Activated CD4-positive, alpha-beta T cell treated with anti-CD3 and anti-CD28 coated beads, Interleukin-2, amount 10 ng/mL, durations not matched to agents 24 days and 14 days (primary cell): ENCODE measurements at regions of chr1 and their contacts with region 1.

Region 1: DNA sequence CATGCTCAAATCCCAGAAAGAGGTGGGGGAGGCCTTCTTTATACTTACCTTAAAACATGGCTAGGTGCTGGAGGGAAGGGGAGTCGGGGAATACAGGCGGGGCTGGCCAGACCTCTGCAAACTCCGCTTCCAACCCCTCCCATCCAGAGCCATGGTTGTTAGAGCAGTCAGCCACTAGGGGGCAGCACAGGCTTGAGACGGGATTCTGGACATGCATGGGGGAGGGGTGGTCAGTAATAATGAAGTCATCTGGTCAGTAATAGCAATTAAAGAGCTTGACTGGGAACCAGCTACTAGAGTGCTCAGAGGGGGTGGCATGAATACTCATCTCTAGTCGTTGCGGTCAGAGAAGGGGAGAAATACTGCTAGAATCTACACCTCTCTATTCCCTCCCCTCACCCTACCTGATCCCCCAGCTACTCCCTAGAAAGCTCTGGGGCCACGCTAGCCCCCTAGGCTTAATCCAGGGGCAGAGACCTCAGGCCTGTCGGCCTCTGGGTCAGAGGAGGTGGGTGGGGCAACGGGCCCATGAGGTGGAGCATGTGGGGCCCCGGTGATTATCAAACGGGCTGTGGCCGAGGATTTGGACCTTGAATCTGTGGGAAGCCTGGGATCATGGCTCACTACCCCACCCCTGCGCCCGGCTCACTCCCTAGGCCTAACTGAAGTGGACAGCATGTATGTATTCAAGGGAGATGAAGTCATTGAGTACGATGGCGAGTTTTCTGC is 2.9 kb downstream of the CASQ1 start:
- DNase-seq: peak; percentile 94
- H3K4me3 Mint-ChIP-seq: no peak overlapping the region
- H3K27ac Mint-ChIP-seq: no peak overlapping the region
- H3K4me1 Mint-ChIP-seq: no peaks in the 10 kb centered on the region
- H3K27me3 Mint-ChIP-seq: no peaks in the 10 kb centered on the region

Region 2: DNA sequence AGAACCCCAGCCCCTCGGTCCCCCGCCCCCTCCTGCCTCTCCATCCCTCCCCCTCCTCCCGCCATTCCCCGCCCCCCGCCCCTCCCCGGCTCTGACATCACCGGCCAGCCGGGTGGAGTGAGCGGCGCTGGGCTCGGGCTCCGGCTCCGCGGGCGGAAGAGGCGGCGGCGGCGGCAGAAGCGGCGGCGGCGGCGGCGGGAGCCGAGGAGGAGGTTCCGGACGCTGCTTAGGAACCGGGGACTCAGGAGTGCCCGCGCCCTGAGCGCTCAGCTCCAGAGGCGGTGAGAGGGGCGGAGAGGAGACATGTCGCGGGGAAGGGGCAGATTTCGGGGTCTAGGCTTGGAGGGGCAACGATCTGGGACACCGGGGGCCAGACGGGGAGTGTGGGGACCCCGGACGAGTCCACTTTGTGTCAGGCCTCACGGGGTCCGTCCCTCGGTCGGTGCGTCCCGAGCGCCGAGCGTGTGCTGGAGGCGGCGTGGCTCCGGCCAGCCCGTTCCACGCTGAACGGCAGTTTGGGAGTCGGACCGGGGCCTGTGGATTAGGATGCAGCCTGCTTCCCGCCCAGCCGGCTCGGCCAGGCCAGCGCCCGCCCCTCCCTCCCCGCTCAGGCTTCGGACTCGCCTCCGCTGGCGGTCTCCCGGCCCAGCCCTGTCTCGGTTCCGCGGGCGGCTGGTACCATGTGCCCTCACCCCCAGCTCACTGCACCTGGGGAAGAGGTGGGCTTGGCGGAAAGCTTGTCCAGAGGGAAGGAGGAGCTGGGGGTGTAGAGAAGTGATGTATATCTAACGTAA is 12.2 kb after region 1 on chr1 and contains the start of gene PEA15:
- intact Hi-C with region 1: loop called (anchors 1 kb)
- DNase-seq: peak; percentile 92
- H3K4me3 Mint-ChIP-seq: peak within 1 kb of the TSS; percentile 91
- H3K27ac Mint-ChIP-seq: peak within 1 kb of the TSS; percentile 91
- H3K4me1 Mint-ChIP-seq: peaks cover 40% of the 10 kb centered on the region
- H3K27me3 Mint-ChIP-seq: no peaks in the 10 kb centered on the region
- total RNA-seq, gene PEA15: 70.2 and 70.9 TPM in 2 replicates

Region 3: GRCh38 chr1:160226623-160227022 is 33.4 kb after region 1 on chr1:
- intact Hi-C with region 1: loop called (anchors 5 kb)
- DNase-seq: no peak
- H3K4me3 Mint-ChIP-seq: no peak overlapping the region
- H3K27ac Mint-ChIP-seq: no peak overlapping the region
- H3K4me1 Mint-ChIP-seq: no peaks in the 10 kb centered on the region
- H3K27me3 Mint-ChIP-seq: no peaks in the 10 kb centered on the region

Region 4: DNA sequence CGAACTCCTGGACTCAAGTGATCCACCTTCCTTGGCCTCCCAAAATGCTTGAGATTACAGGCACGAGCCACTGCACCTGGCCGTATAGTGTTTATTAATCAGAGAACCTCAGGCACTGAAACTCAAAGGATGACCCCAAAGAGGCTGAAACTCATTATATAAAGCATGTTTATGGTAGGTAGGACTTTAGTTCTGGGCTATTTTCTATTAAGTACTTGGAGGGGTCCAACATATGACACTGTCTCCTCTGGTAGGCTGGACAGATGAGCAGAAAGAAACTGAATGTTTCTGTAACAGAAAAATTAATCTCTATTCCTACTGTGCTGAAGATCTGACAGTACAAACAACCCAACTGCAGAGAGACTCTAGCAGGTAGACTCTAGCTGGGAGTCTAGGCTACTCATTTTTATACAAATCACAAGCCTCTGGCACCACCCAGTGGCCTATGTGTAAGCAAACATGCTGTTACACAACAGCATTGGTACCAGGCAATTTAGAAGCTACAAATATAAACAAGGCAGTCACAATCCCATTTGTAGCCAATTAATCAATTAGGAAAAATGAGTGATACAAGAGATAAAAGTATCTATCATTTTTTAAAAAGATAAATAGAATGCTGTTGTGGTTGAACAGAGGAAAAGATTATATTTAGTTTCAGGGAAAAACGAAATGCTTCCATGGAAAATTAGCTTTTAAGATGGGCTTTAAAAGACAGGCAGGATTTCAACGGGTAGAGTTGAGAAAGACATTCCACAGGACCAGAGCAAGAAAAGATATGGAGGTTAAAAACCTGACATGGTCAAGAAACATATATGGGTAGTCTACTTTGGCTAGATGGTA is 58.7 kb after region 1 on chr1:
- intact Hi-C with region 1: loop called (anchors 1 kb)
- DNase-seq: peak; percentile 87
- H3K4me3 Mint-ChIP-seq: no peak overlapping the region
- H3K27ac Mint-ChIP-seq: no peak overlapping the region
- H3K4me1 Mint-ChIP-seq: peaks cover 9% of the 10 kb centered on the region
- H3K27me3 Mint-ChIP-seq: no peaks in the 10 kb centered on the region

Region 5: DNA sequence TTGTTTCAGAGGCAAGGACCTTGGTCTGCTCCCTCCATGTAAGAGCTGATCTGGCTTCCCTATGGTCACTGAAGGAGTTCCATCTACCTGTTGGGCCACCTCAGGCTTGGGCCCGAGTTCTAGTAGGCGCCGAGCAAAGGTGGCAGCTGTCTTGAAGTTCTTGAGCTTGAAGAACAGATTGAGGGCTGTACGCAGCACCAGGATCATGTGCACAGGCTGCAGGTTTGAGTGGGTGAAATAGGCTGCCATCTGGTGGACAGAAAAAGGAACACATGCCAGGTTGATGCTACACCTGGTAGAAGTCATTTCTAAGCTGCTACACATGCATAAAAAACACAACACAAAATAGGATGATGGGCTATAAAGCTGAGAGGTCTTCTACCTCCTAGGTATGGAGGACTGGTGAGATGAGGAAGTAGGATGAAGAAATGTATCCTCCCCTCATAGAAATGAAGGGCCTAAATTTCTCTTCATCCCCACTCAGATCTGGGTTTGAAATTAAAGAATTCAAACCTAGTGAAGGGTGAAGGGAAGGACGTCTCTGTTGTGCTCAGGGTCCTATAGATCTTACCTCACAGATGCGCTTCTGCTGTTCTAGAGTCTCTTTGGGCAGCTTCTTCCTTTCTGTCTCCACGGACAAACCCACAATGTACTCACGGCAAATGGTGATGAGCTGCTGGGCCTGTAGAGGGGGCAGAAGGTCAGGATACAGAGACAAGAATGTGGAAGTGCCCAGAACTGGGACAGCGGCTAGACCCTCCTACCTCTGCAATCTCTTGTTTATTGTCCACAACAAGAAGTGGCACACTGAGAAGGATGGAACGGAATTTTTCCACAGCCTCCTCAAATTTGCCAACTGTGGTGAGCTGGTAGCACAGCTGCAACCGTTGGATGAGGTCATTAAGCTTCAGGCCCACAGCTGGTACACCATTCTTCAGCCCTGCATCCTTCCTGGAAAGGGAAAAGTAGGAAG is 98.3 kb after region 1 on chr1:
- intact Hi-C with region 1: loop called (anchors 1 kb)
- DNase-seq: peak; percentile 90
- H3K4me3 Mint-ChIP-seq: no peak overlapping the region
- H3K27ac Mint-ChIP-seq: peak overlapping the region; percentile 73
- H3K4me1 Mint-ChIP-seq: peaks cover 2% of the 10 kb centered on the region
- H3K27me3 Mint-ChIP-seq: no peaks in the 10 kb centered on the region

Region 6: DNA sequence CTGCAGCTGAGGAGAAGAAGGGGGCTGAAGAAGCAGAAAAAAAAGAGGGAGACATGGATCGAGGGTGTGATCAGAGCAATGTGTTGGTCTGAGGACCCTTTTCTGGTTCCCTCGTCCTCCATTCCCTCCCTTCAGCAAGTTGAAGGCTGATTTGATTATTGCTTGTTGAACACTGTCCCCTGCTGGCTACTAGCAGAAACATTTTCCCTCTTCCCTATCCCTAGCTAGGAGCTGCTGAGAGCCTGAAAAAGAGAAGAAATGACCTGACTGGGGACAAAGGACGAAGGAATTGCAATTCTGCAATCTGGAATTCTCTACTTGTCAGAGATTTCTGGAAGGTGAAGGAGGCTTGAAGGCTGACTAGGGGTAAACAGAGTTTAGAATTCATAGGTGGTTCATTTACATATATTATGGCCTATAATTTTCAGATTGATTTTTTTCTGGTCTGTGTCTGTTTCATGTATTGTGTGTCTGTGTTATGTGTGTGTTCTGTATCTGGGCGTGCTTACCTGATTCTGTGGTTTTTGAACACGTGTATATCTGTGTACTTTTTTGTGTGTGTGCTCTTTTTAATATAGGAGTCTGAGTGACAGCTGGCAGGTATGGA is 183.4 kb after region 1 on chr1:
- intact Hi-C with region 1: loop called (anchors 2 kb)
- DNase-seq: peak; percentile 80
- H3K4me3 Mint-ChIP-seq: no peak overlapping the region
- H3K27ac Mint-ChIP-seq: no peak overlapping the region
- H3K4me1 Mint-ChIP-seq: peaks cover 13% of the 10 kb centered on the region
- H3K27me3 Mint-ChIP-seq: peaks cover 13% of the 10 kb centered on the region